CD4-positive, alpha-beta memory T cell (primary cell): ENCODE measurements at regions of chr15 and their contacts with region 1.

Region 1: GRCh38 chr15:51776952-51777574 is 25.7 kb downstream of the TMOD2 start:
- DNase-seq: peak; percentile 55 to 64 (median 58)
- H3K4me3 ChIP-seq: no peak overlapping the region
- H3K4me3 Mint-ChIP-seq: no peak overlapping the region
- H3K27ac ChIP-seq: no peak overlapping the region
- H3K27ac Mint-ChIP-seq: peak overlapping the region in 2 of 7 donors; percentile 12 to 36
- H3K4me1 ChIP-seq: no peaks in the 10 kb centered on the region
- H3K4me1 Mint-ChIP-seq: peaks cover 4 to 9% (median 7%) of the 10 kb centered on the region in 4 donors
- H3K27me3 ChIP-seq: no peaks in the 10 kb centered on the region
- H3K27me3 Mint-ChIP-seq: no peaks in the 10 kb centered on the region

Region 2: GRCh38 chr15:51589867-51590542 is 187.1 kb before region 1 on chr15:
- CTCF ChIA-PET with region 1: no interaction called
- POLR2A ChIA-PET with region 1: no interaction called
- intact Hi-C with region 1: no loop called
- DNase-seq: no peak
- H3K4me3 ChIP-seq: no peak overlapping the region
- H3K4me3 Mint-ChIP-seq: no peak overlapping the region
- H3K27ac ChIP-seq: no peak overlapping the region
- H3K27ac Mint-ChIP-seq: no peak overlapping the region
- H3K4me1 ChIP-seq: no peaks in the 10 kb centered on the region
- H3K4me1 Mint-ChIP-seq: no peaks in the 10 kb centered on the region
- H3K27me3 ChIP-seq: no peaks in the 10 kb centered on the region
- H3K27me3 Mint-ChIP-seq: peaks cover 0 to 4% of the 10 kb centered on the region in 2 donors

Region 3: GRCh38 chr15:51641528-51642130 is 135.4 kb before region 1 on chr15:
- CTCF ChIA-PET with region 1: interaction called, 283 read pairs
- POLR2A ChIA-PET with region 1: no interaction called
- intact Hi-C with region 1: no loop called
- DNase-seq: no peak
- H3K4me3 ChIP-seq: no peak overlapping the region
- H3K4me3 Mint-ChIP-seq: no peak overlapping the region
- H3K27ac ChIP-seq: no peak overlapping the region
- H3K27ac Mint-ChIP-seq: no peak overlapping the region
- H3K4me1 ChIP-seq: no peaks in the 10 kb centered on the region
- H3K4me1 Mint-ChIP-seq: no peaks in the 10 kb centered on the region
- H3K27me3 ChIP-seq: no peaks in the 10 kb centered on the region
- H3K27me3 Mint-ChIP-seq: peaks cover 2% of the 10 kb centered on the region in 2 donors

Region 4: DNA sequence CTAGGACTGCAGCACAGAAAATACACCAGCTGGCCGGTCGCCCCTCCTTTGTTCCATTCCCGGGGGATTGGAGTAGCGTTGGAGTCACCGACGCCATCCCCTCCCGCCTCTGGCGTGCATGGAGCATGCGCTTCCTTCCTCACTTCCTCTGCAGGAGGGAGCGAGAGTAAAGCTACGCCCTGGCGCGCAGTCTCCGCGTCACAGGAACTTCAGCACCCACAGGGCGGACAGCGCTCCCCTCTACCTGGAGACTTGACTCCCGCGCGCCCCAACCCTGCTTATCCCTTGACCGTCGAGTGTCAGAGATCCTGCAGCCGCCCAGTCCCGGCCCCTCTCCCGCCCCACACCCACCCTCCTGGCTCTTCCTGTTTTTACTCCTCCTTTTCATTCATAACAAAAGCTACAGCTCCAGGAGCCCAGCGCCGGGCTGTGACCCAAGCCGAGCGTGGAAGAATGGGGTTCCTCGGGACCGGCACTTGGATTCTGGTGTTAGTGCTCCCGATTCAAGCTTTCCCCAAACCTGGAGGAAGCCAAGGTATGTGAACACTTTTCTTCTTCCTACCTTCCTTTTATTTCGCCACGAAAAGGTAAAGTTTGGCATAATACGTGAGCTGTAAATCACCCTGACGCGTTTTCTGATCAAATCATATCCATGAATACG is 95.6 kb before region 1 on chr15 and contains the start of gene SCG3:
- CTCF ChIA-PET with region 1: interaction called, 10 read pairs
- POLR2A ChIA-PET with region 1: no interaction called
- intact Hi-C with region 1: no loop called
- DNase-seq: peak; percentile 34 to 51 (median 36)
- H3K4me3 ChIP-seq: no peak within 1 kb of the TSS
- H3K4me3 Mint-ChIP-seq: no peak within 1 kb of the TSS
- H3K27ac ChIP-seq: no peak within 1 kb of the TSS
- H3K27ac Mint-ChIP-seq: no peak within 1 kb of the TSS
- H3K4me1 ChIP-seq: no peaks in the 10 kb centered on the region
- H3K4me1 Mint-ChIP-seq: peaks cover 0 to 9% (median under 1%) of the 10 kb centered on the region in 4 donors
- H3K27me3 ChIP-seq: peaks cover 11% of the 10 kb centered on the region
- H3K27me3 Mint-ChIP-seq: peaks cover 36 to 43% of the 10 kb centered on the region in 2 donors
- total RNA-seq, gene SCG3: not detected

Region 5: GRCh38 chr15:51731549-51732267 is 45.4 kb before region 1 on chr15:
- CTCF ChIA-PET with region 1: interaction called, 38 read pairs
- POLR2A ChIA-PET with region 1: interaction called, 15 read pairs
- intact Hi-C with region 1: loop called (anchors 1 kb)
- DNase-seq: peak; percentile 51 to 74 (median 61)
- H3K4me3 ChIP-seq: peak overlapping the region; percentile 15 to 57
- H3K4me3 Mint-ChIP-seq: peak overlapping the region; percentile 85 to 95 (median 88)
- H3K27ac ChIP-seq: peak overlapping the region; percentile 78
- H3K27ac Mint-ChIP-seq: peak overlapping the region; percentile 95 to 98 (median 97)
- H3K4me1 ChIP-seq: peaks cover 87% of the 10 kb centered on the region
- H3K4me1 Mint-ChIP-seq: peaks cover 60 to 96% (median 79%) of the 10 kb centered on the region in 4 donors
- H3K27me3 ChIP-seq: no peaks in the 10 kb centered on the region
- H3K27me3 Mint-ChIP-seq: no peaks in the 10 kb centered on the region

Region 6: GRCh38 chr15:51758645-51759044 is 18.4 kb before region 1 on chr15:
- CTCF ChIA-PET with region 1: interaction called, 31 read pairs
- POLR2A ChIA-PET with region 1: no interaction called
- intact Hi-C with region 1: no loop called
- DNase-seq: no peak
- H3K4me3 ChIP-seq: no peak overlapping the region
- H3K4me3 Mint-ChIP-seq: no peak overlapping the region
- H3K27ac ChIP-seq: no peak overlapping the region
- H3K27ac Mint-ChIP-seq: peak overlapping the region in 1 of 7 donors; percentile 40
- H3K4me1 ChIP-seq: peaks cover 8% of the 10 kb centered on the region
- H3K4me1 Mint-ChIP-seq: peaks cover 11 to 23% (median 15%) of the 10 kb centered on the region in 4 donors
- H3K27me3 ChIP-seq: no peaks in the 10 kb centered on the region
- H3K27me3 Mint-ChIP-seq: no peaks in the 10 kb centered on the region

Region 7: DNA sequence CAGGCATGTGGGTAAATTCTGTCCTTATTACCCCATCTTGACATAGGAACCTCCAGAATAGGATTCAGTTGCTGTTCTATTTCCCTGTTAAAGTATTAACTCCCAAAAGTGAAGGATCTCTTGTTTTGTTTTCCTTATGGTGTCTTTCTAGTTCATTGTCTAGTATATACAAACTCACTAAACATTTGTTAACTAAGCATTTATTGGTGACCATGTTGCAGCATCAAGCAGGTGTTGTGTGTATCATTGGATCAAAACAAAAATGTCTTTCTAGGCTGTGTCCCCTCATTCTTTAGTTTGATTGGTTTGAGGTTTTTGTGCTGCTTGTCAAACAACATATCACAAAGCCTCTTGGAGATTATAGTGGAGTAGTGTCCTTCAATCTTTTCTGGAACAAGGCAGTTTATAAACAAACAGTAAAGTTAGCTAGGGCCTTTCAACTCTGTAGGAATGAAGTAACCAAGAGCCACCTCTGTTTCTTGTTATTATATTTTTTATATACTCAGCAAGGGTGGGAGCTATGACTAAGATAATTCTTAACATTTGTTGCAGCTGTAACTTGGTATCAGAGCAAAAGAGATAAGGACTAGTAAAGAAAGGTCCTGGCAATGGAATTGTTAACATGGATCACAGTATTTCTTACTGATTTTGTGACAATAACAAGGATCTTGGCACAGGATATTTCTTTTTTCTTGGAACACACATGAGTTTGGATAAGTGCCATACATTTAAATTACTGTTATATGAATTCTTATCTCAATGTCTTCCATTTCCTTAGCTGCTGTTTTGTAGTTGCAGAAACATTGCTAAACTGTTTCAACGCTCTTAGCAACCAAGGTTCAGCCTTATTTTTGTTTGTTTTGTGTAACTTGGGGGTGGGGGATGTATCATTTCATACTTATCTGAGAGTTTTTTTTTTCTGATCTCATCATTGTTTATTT is 101.7 kb after region 1 on chr15:
- CTCF ChIA-PET with region 1: no interaction called
- POLR2A ChIA-PET with region 1: no interaction called
- intact Hi-C with region 1: no loop called
- DNase-seq: peak in 3 of 5 donors; percentile 22 to 55 (median 29)
- H3K4me3 ChIP-seq: no peak overlapping the region
- H3K4me3 Mint-ChIP-seq: peak overlapping the region in 3 of 8 donors; percentile 32 to 47 (median 33)
- H3K27ac ChIP-seq: no peak overlapping the region
- H3K27ac Mint-ChIP-seq: peak overlapping the region; percentile 38 to 87 (median 81)
- H3K4me1 ChIP-seq: peaks cover 16% of the 10 kb centered on the region
- H3K4me1 Mint-ChIP-seq: peaks cover 24 to 45% (median 28%) of the 10 kb centered on the region in 4 donors
- H3K27me3 ChIP-seq: no peaks in the 10 kb centered on the region
- H3K27me3 Mint-ChIP-seq: no peaks in the 10 kb centered on the region